GM12878 (cell line): ENCODE measurements at regions of chr11 and their contacts with region 1.

Region 1: GRCh38 chr11:60951899-60952741 is at the start of gene SLC15A3:
- DNase-seq: peak; percentile 61
- ATAC-seq: peak; percentile 88
- H3K4me3 ChIP-seq: peak within 1 kb of the TSS; percentile 94
- H3K27ac ChIP-seq: peak within 1 kb of the TSS; percentile 97
- H3K4me1 ChIP-seq: peaks cover 28% of the 10 kb centered on the region
- H3K27me3 ChIP-seq: no peaks in the 10 kb centered on the region
- CTCF ChIP-seq: no peak
- EP300 ChIP-seq: 0 out of 4 replicates have a peak, but pooled peaks of 1 of the 2 experiments have one; percentile 23
- POLR2A ChIP-seq: peak; percentile 85
- RAD21 ChIP-seq: no peak
- polyA plus RNA-seq, gene SLC15A3: 17.7 to 55.4 TPM

Region 2: DNA sequence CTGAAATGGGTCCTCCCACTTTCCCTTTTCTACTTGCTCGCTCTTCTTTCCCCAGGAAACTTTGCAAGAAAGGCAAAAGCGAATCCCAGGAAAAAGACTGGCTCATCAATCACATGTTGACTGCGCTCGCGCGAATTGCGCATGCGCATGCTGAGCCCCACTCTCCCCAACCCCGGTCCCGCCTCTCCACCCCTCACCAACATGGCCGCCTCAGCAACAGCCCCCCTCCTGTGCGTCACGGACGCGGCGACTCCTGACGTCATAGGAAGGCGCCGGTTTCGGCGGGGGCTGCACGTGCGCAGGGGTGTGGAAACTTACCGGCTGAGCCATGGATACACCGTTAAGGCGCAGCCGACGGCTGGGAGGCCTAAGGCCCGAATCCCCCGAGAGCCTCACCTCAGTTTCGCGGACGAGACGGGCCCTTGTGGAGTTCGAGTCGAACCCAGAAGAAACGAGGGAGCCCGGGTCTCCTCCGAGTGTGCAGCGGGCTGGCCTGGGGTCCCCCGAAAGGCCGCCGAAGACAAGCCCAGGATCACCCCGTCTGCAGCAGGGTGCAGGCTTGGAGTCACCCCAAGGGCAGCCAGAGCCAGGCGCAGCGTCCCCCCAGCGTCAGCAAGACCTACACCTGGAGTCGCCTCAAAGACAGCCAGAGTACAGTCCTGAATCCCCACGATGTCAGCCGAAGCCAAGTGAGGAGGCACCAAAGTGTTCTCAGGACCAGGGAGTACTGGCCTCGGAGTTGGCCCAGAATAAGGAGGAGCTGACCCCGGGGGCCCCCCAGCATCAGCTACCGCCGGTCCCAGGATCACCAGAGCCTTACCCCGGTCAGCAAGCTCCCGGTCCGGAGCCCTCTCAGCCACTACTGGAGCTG is 110.1 kb before region 1 on chr11 and contains the start of gene CCDC86:
- CTCF ChIA-PET with region 1: no interaction called
- POLR2A ChIA-PET with region 1: no interaction called
- RAD21 ChIA-PET with region 1: no interaction called
- SMC1A ChIA-PET with region 1: no interaction called
- in situ Hi-C with region 1: no loop called
- intact Hi-C with region 1: loop called (anchors 10 kb)
- DNase-seq: peak; percentile 78
- ATAC-seq: peak; percentile 87
- H3K4me3 ChIP-seq: peak within 1 kb of the TSS; percentile 92
- H3K27ac ChIP-seq: peak within 1 kb of the TSS; percentile 72
- H3K4me1 ChIP-seq: peaks cover 4% of the 10 kb centered on the region
- H3K27me3 ChIP-seq: no peaks in the 10 kb centered on the region
- CTCF ChIP-seq: no peak
- EP300 ChIP-seq: peak in 1 of 2 experiments; percentile 18; a peak in 1 of 4 replicates
- POLR2A ChIP-seq: peak; percentile 73
- RAD21 ChIP-seq: no peak
- polyA plus RNA-seq, gene CCDC86: 2.0 to 4.4 TPM